ENCODE measurements at regions of chr7 and their contacts with region 1.

Region 1: GRCh38 chr7:73738612-73739374 is at the start of gene ABHD11:
- DNase-seq: peak; percentile 99
- H3K4me3 ChIP-seq: peak within 1 kb of the TSS; percentile 63
- H3K4me3 Mint-ChIP-seq: peak within 1 kb of the TSS; percentile 98
- H3K27ac Mint-ChIP-seq: peak within 1 kb of the TSS; percentile 100
- H3K4me1 ChIP-seq: peaks cover 46% of the 10 kb centered on the region
- H3K4me1 Mint-ChIP-seq: peaks cover 25% of the 10 kb centered on the region
- H3K27me3 ChIP-seq: no peaks in the 10 kb centered on the region
- H3K27me3 Mint-ChIP-seq: no peaks in the 10 kb centered on the region
- CTCF ChIP-seq: no peak
- total RNA-seq, gene ABHD11: 38.9 and 47.2 TPM in 2 replicates

Region 2: GRCh38 chr7:73769992-73770859 is 31.4 kb after region 1 on chr7 and contains the start of gene CLDN3:
- CTCF ChIA-PET with region 1: interaction called, 3 read pairs
- POLR2A ChIA-PET with region 1: interaction called, 8 read pairs
- intact Hi-C with region 1: loop called (anchors 1 kb)
- DNase-seq: peak; percentile 93 to 94
- H3K4me3 ChIP-seq: peak within 1 kb of the TSS; percentile 66
- H3K4me3 Mint-ChIP-seq: peak within 1 kb of the TSS; percentile 81
- H3K27ac Mint-ChIP-seq: peak within 1 kb of the TSS; percentile 73
- H3K4me1 ChIP-seq: peaks cover 15% of the 10 kb centered on the region
- H3K4me1 Mint-ChIP-seq: peaks cover 18% of the 10 kb centered on the region
- H3K27me3 ChIP-seq: no peaks in the 10 kb centered on the region
- H3K27me3 Mint-ChIP-seq: no peaks in the 10 kb centered on the region
- CTCF ChIP-seq: peak in 1 of 2 experiments; percentile 21
- total RNA-seq, gene CLDN3: 19.6 and 21.0 TPM in 2 replicates

Region 3: DNA sequence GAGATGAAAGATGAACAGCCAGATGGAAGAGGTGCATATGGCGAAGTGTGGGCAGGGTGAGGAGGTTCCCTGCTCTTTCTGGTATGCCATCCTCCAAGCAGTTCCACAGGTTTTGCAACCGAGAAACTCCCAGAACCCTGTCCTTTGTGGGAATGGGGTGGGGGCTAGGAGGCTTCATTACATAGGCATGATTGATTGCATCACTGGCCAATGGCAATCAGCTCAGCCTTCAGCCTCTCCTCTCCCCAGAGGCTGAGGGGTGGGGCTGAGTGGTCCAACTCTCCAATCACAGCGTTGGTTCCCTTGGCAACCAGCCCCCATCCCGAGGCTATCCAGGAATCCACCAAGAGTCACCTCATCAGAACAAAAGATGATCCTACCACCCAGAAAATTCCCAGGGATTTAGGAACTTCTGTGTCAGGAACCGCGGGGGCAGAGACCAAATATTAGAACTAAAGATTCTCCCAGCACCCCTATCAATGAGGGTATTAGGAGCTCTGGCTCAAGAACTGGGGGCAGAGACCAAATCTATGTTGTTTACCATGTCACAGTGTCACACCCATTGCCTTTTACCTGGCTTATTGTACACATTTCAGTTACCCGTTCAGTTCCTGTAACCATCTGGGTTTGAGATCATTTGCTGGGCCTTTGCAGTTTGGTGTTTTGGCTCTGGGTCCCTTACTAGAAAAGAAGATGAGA is 54.0 kb after region 1 on chr7:
- CTCF ChIA-PET with region 1: interaction called, 5 read pairs
- POLR2A ChIA-PET with region 1: interaction called, 13 read pairs
- intact Hi-C with region 1: loop called (anchors 1 kb)
- DNase-seq: peak; percentile 91 to 98
- H3K4me3 ChIP-seq: no peak overlapping the region
- H3K4me3 Mint-ChIP-seq: no peak overlapping the region
- H3K27ac Mint-ChIP-seq: peak overlapping the region; percentile 10
- H3K4me1 ChIP-seq: peaks cover 40% of the 10 kb centered on the region
- H3K4me1 Mint-ChIP-seq: peaks cover 37% of the 10 kb centered on the region
- H3K27me3 ChIP-seq: no peaks in the 10 kb centered on the region
- H3K27me3 Mint-ChIP-seq: no peaks in the 10 kb centered on the region
- CTCF ChIP-seq: no peak